Activated CD4-positive, alpha-beta T cell treated with anti-CD3 and anti-CD28 coated beads for 36 hours (primary cell): ENCODE measurements at regions of chrX and their contacts with region 1.

Region 1: GRCh38 chrX:119516157-119516702 is 48.0 kb downstream of the SLC25A5 start:
- DNase-seq: peak; percentile 44
- ATAC-seq: peak; percentile 97
- H3K4me3 Mint-ChIP-seq: no peak overlapping the region
- H3K27ac Mint-ChIP-seq: no peak overlapping the region
- H3K4me1 Mint-ChIP-seq: peaks cover 4% of the 10 kb centered on the region
- H3K27me3 Mint-ChIP-seq: no peaks in the 10 kb centered on the region

Region 2: GRCh38 chrX:119488749-119489148 is 27.5 kb before region 1 on chrX:
- CTCF ChIA-PET with region 1: interaction called, 3 read pairs
- POLR2A ChIA-PET with region 1: no interaction called
- intact Hi-C with region 1: loop called in 1 of 2 experiments (anchors 1 kb)
- DNase-seq: peak; percentile 54
- ATAC-seq: no peak
- H3K4me3 Mint-ChIP-seq: no peak overlapping the region
- H3K27ac Mint-ChIP-seq: no peak overlapping the region
- H3K4me1 Mint-ChIP-seq: no peaks in the 10 kb centered on the region
- H3K27me3 Mint-ChIP-seq: no peaks in the 10 kb centered on the region

Region 3: GRCh38 chrX:119574394-119575266 is 58.4 kb after region 1 on chrX and contains the start of gene UBE2A:
- CTCF ChIA-PET with region 1: interaction called, 4 read pairs
- POLR2A ChIA-PET with region 1: no interaction called
- intact Hi-C with region 1: loop called in 1 of 2 experiments (anchors 2 kb)
- DNase-seq: peak; percentile 92
- ATAC-seq: peak; percentile 92
- H3K4me3 Mint-ChIP-seq: peak within 1 kb of the TSS; percentile 94
- H3K27ac Mint-ChIP-seq: peak within 1 kb of the TSS; percentile 87
- H3K4me1 Mint-ChIP-seq: peaks cover 24% of the 10 kb centered on the region
- H3K27me3 Mint-ChIP-seq: no peaks in the 10 kb centered on the region
- total RNA-seq, gene UBE2A: 49.2 to 67.9 TPM

Region 4: GRCh38 chrX:119729408-119730201 is 213.4 kb after region 1 on chrX:
- CTCF ChIA-PET with region 1: interaction called, 10 read pairs
- POLR2A ChIA-PET with region 1: no interaction called
- intact Hi-C with region 1: loop called (anchors 1 to 5 kb)
- DNase-seq: peak; percentile 74
- ATAC-seq: peak; percentile 60
- H3K4me3 Mint-ChIP-seq: no peak overlapping the region
- H3K27ac Mint-ChIP-seq: no peak overlapping the region
- H3K4me1 Mint-ChIP-seq: peaks cover 6% of the 10 kb centered on the region
- H3K27me3 Mint-ChIP-seq: no peaks in the 10 kb centered on the region

Region 5: GRCh38 chrX:119784747-119785446 is 268.7 kb after region 1 on chrX:
- CTCF ChIA-PET with region 1: no interaction called
- POLR2A ChIA-PET with region 1: no interaction called
- intact Hi-C with region 1: loop called in 1 of 2 experiments (anchors 2 kb)
- DNase-seq: peak; percentile 63
- ATAC-seq: peak; percentile 75
- H3K4me3 Mint-ChIP-seq: no peak overlapping the region
- H3K27ac Mint-ChIP-seq: peak overlapping the region; percentile 34
- H3K4me1 Mint-ChIP-seq: peaks cover 25% of the 10 kb centered on the region
- H3K27me3 Mint-ChIP-seq: no peaks in the 10 kb centered on the region

Region 6: GRCh38 chrX:119880552-119881437 is 364.6 kb after region 1 on chrX:
- CTCF ChIA-PET with region 1: no interaction called
- POLR2A ChIA-PET with region 1: no interaction called
- intact Hi-C with region 1: loop called in 1 of 2 experiments (anchors 2 kb)
- DNase-seq: peak; percentile 44
- ATAC-seq: peak; percentile 92
- H3K4me3 Mint-ChIP-seq: no peak overlapping the region
- H3K27ac Mint-ChIP-seq: peak overlapping the region; percentile 60
- H3K4me1 Mint-ChIP-seq: peaks cover 10% of the 10 kb centered on the region
- H3K27me3 Mint-ChIP-seq: no peaks in the 10 kb centered on the region